ENCODE measurements at regions of chr7 and their contacts with region 1.

Region 1: DNA sequence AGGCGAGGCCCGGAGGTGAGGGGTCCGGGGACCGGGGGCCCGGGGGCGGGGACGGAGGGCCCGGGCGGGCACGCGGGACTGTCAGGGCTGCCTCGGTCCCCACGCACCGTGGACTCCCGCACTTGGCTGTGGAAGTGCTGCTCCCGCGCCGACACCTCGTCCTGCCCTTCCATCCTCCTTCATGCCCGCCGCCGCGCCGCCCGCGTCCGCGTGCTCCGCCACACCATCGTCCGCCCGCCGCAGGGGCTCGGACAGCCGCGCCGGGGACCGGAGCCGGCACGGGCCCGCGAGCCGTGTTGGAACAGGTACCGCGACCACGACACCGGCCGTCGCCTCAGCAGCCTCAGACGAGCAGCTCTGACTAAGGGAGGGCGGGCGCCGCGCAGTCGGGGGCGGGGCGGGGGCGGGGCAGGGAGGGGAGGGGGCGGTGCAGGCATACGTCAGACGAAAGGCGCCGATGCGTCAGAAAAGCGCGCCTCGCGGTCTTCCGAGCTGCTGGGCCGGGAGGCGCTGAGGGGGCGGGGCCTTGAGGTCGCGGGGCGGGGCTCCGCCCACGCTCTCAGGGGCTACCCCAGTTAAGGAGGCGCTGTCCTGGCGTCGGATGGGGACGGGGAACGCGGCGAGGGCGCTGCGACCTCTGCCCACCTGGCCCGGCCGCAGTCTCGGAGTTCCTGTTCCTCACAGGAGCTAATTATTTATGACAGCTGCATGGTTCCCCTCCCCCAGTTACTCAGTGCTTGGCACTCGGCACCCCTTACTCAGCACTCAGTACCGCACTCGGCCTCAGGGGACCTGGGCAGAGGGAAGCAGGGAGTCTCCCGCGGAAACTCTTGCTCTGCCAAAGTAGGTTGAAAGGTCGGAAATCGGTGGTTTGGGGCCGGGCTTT is at the start of gene LMBR1:
- DNase-seq: peak; percentile 93 to 96
- ATAC-seq: peak; percentile 95 to 99 (median 98)
- H3K4me3 ChIP-seq: peak within 1 kb of the TSS; percentile 64 to 95 (median 84)
- H3K27ac ChIP-seq: peak within 1 kb of the TSS; percentile 82 to 98 (median 94)
- H3K4me1 ChIP-seq: peaks cover 0 to 45% (median 32%) of the 10 kb centered on the region in 9 donors
- H3K27me3 ChIP-seq: no peaks in the 10 kb centered on the region
- CTCF ChIP-seq: peak; percentile 41 to 75 (median 61)
- total RNA-seq, gene LMBR1: 25.5 to 45.5 (median 39.3) TPM

Region 2: DNA sequence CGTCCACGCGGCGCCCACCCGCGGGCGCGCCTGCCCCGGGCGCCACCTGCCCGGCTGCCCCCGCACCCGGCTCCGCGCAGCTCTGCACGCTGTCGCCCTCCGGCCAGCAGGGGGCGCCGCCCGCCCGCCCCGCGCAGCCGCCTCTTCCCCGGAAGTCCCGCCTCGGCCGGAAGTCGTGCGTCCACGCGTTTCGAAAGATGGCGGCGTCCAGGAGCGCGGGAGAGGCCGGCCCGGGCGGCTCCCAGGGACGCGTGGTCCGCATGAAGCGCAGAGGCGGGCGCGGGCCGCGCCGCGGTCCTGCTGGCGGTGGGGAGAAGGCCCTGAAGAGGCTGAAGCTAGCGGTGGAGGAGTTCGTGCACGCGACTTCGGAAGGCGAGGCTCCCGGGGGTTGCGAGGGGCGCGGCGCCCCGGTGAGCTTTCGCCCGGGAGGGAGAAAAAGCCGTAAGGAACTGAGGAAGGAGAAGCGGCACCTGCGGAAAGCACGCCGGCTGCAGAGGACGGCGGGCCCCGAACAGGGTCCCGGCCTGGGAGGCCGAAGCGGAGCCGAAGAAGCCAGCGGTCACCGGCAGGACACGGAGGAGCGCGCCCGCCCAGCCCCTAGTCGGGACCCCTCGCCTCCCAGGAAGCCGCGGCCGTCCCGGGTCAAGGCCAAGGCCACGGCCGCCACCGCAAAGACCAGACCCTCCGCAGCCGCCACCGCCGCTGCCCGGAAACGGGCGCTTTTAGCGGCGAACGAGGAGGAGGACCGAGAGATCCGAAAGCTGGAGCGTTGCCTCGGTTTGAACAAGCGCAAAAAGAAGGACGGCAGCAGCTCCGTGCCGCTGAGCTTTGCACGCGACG is 56.7 kb after region 1 on chr7 and contains the start of gene NOM1:
- intact Hi-C with region 1: loop called in 2 of 10 experiments (anchors 5 to 10 kb)
- DNase-seq: peak; percentile 92 to 93
- ATAC-seq: peak; percentile 95 to 99 (median 98)
- H3K4me3 ChIP-seq: peak within 1 kb of the TSS; percentile 70 to 100 (median 98)
- H3K27ac ChIP-seq: peak within 1 kb of the TSS; percentile 31 to 88 (median 74)
- H3K4me1 ChIP-seq: peaks cover 4 to 33% (median 23%) of the 10 kb centered on the region in 9 donors
- H3K27me3 ChIP-seq: peaks cover 0 to 19% (median 10%) of the 10 kb centered on the region in 7 donors
- CTCF ChIP-seq: peak; percentile 64 to 99 (median 81)
- total RNA-seq, gene NOM1: 6.6 to 13.6 (median 8.9) TPM

Region 3: GRCh38 chr7:157047148-157047547 is 154.1 kb after region 1 on chr7:
- intact Hi-C with region 1: no loop called
- DNase-seq: no peak
- ATAC-seq: no peak
- H3K4me3 ChIP-seq: no peak overlapping the region
- H3K27ac ChIP-seq: no peak overlapping the region
- H3K4me1 ChIP-seq: no peaks in the 10 kb centered on the region
- H3K27me3 ChIP-seq: peaks cover 0 to 41% (median 22%) of the 10 kb centered on the region in 7 donors
- CTCF ChIP-seq: no peak

Region 4: DNA sequence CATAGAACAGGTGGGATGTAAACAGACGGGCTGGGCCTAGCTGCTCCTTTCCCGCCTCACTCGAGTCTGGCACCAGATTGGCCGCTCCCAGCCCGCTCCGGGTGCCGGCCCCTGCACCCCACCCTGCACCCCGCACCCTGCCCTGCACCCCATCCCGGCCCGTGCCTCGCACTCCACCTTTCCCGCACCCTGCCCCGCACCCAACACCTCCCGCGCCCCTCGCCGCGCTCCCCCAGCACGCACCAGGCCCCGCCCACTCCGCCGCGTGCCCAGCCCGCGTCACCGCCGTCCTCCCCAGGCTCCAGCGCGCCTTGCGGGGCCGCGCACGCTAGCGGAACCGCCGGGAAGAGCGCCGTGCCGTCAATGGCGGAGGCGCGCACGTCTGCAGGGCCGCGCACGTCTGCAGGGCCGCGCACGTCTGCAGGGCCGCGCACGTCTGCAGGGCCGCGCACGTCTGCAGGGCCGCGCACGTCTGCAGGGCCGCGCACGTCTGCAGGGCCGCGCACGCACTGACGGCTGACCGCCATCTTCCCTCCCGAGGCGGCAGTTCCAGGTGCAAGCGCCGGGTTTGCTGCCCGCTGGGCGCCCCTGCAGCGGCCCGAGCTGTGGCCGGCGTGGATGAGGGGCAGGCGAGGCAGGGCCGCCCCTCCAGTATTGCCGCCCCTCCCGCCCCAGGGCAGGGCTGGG is 245.5 kb after region 1 on chr7 and contains the start of gene UBE3C:
- intact Hi-C with region 1: loop called in 1 of 10 experiments (anchors 10 kb)
- DNase-seq: peak; percentile 90 to 94
- ATAC-seq: peak; percentile 95 to 97 (median 96)
- H3K4me3 ChIP-seq: peak within 1 kb of the TSS; percentile 64 to 89 (median 82)
- H3K27ac ChIP-seq: peak within 1 kb of the TSS; percentile 80 to 96 (median 88)
- H3K4me1 ChIP-seq: peaks cover 4 to 46% (median 29%) of the 10 kb centered on the region in 9 donors
- H3K27me3 ChIP-seq: no peaks in the 10 kb centered on the region
- CTCF ChIP-seq: peak in 2 of 9 donors; percentile 8 to 10
- total RNA-seq, gene UBE3C: 39.0 to 53.8 (median 49.1) TPM

Region 5: GRCh38 chr7:157193274-157193673 is 300.2 kb after region 1 on chr7:
- intact Hi-C with region 1: no loop called
- DNase-seq: no peak
- ATAC-seq: no peak
- H3K4me3 ChIP-seq: no peak overlapping the region
- H3K27ac ChIP-seq: no peak overlapping the region
- H3K4me1 ChIP-seq: no peaks in the 10 kb centered on the region
- H3K27me3 ChIP-seq: no peaks in the 10 kb centered on the region
- CTCF ChIP-seq: no peak

Measured in heart right ventricle (tissue), 16 donors.